Dendritic cell treated with granulocyte-macrophage colony-stimulating factor and Interleukin-4, amounts not matched to agents 40 ng/mL and 50 ng/mL, for 4 days (primary cell): ENCODE measurements at regions of chr7 and their contacts with region 1.

Region 1: DNA sequence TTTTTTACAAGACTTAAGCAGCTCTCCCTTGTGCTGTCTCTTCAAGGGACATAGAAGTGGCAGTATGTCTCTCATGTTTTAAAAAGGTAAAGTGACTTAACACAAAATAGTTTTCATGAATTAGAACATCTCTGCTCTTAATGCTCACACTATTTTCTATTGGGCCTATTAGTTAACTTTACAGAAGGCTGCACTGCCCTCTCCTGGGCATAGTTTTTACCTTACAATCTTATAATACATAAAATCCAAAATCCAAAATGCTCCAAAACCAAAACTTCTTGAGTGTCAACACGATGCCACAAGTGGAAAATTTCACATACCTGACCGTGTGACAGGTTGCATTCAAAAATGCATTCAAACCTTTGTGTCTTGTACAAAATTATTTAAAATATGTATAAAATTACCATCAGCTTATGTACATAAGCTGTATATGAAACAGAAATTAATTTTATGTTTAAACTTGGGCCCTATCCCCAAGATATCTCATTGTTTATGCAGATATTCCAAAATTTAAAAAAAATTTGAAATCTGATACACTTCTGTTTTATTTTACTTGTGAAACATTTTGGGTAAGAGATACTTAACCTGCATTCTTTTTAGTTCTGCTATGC is 25.8 kb downstream of the TES start:
- H3K4me3 Mint-ChIP-seq: no peak overlapping the region
- H3K27ac Mint-ChIP-seq: no peak overlapping the region
- H3K4me1 Mint-ChIP-seq: peaks cover 21% of the 10 kb centered on the region
- H3K27me3 Mint-ChIP-seq: no peaks in the 10 kb centered on the region

Region 2: GRCh38 chr7:116138202-116138801 is 97.8 kb before region 1 on chr7:
- intact Hi-C with region 1: loop called (anchors 2 kb)
- H3K4me3 Mint-ChIP-seq: no peak overlapping the region
- H3K27ac Mint-ChIP-seq: no peak overlapping the region
- H3K4me1 Mint-ChIP-seq: peaks cover 13% of the 10 kb centered on the region
- H3K27me3 Mint-ChIP-seq: peaks cover 2% of the 10 kb centered on the region

Region 3: DNA sequence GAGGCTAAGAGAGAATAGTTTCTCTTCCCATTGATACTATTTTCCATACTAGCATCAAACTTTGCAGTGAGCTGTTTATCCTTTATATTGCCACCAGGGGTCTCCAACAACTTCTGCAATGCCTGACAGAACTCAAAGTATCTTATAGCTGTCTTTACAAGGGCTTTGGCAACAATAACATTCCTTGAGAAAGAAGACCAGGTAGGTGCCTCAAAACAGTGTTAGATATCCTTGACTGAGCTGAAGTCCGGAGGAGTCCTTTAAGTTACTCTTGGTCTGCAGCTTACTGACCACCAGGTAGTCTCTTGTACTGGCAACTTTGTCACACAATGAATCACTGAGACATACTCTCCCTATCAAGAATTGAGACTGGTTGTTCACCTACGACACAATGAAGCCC is 55.8 kb before region 1 on chr7:
- intact Hi-C with region 1: loop called (anchors 1 kb)
- H3K4me3 Mint-ChIP-seq: no peak overlapping the region
- H3K27ac Mint-ChIP-seq: no peak overlapping the region
- H3K4me1 Mint-ChIP-seq: peaks cover 5% of the 10 kb centered on the region
- H3K27me3 Mint-ChIP-seq: no peaks in the 10 kb centered on the region

Region 4: GRCh38 chr7:116271963-116272839 is 36.1 kb after region 1 on chr7:
- intact Hi-C with region 1: no loop called
- H3K4me3 Mint-ChIP-seq: no peak overlapping the region
- H3K27ac Mint-ChIP-seq: no peak overlapping the region
- H3K4me1 Mint-ChIP-seq: no peaks in the 10 kb centered on the region
- H3K27me3 Mint-ChIP-seq: peaks cover 2% of the 10 kb centered on the region